ENCODE measurements at regions of chr18 and their contacts with region 1.

Region 1: DNA sequence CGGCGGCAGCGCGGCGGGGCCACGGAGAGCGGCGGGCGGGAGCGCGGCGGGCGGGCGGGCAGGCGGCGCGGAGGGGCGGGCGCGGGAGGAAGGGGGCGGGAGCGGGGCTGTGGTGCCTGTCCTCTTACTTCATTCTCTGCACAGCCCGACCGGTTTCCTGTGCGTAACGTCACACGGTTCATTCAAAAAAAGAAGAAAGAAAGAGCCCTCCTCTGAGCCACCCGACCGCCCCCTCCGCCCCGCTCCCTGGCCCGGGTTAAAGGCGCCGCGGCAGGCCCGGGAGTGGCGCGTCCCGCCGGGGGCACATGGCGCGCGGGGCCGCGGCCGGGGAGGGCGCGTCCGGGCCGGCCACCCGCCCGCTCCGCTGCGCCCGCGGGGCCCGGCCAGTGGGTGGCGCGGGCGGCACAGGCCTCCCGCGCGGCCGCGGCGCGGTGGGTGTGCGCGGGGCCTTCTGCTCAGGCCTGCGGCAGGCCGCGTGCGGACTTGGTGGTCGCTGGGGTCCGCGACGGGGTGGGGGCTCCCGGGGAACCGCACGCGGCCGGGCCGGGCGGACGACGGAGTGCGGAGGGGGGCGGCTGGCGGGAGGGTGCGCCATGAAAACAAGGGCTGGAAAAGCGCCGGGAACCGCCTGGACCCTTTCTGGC is 599 bp upstream of the BCL2 start:
- DNase-seq: peak; percentile 75
- ATAC-seq: peak; percentile 76
- H3K4me3 ChIP-seq: peak overlapping the region; percentile 63
- H3K27ac ChIP-seq: peak overlapping the region; percentile 30
- H3K4me1 ChIP-seq: peaks cover 10% of the 10 kb centered on the region
- H3K27me3 ChIP-seq: peaks cover 18% of the 10 kb centered on the region
- CTCF ChIP-seq: 0 out of 2 replicates have a peak, but pooled peaks have one; percentile 23
- POLR2A ChIP-seq: no peak
- RAD21 ChIP-seq: no peak

Region 2: GRCh38 chr18:63016270-63016669 is 303.9 kb before region 1 on chr18:
- CTCF ChIA-PET with region 1: interaction called, 6 read pairs
- POLR2A ChIA-PET with region 1: no interaction called
- dilution Hi-C with region 1: no loop called
- in situ Hi-C with region 1: loop called (anchors 5 kb)
- intact Hi-C with region 1: loop called (anchors 1 kb)
- DNase-seq: peak; percentile 59
- ATAC-seq: peak; percentile 77
- H3K4me3 ChIP-seq: no peak overlapping the region
- H3K27ac ChIP-seq: no peak overlapping the region
- H3K4me1 ChIP-seq: no peaks in the 10 kb centered on the region
- H3K27me3 ChIP-seq: peaks cover 12% of the 10 kb centered on the region
- CTCF ChIP-seq: peak; percentile 92
- POLR2A ChIP-seq: no peak
- RAD21 ChIP-seq: peak; percentile 86

Region 3: GRCh38 chr18:63131106-63131958 is 188.8 kb before region 1 on chr18:
- CTCF ChIA-PET with region 1: interaction called, 20 read pairs
- POLR2A ChIA-PET with region 1: interaction called, 3 read pairs
- dilution Hi-C with region 1: no loop called
- in situ Hi-C with region 1: loop called (anchors 5 kb)
- intact Hi-C with region 1: loop called (anchors 1 kb)
- DNase-seq: peak; percentile 59
- ATAC-seq: peak; percentile 81
- H3K4me3 ChIP-seq: no peak overlapping the region
- H3K27ac ChIP-seq: no peak overlapping the region
- H3K4me1 ChIP-seq: no peaks in the 10 kb centered on the region
- H3K27me3 ChIP-seq: peaks cover 14% of the 10 kb centered on the region
- CTCF ChIP-seq: peak; percentile 75
- POLR2A ChIP-seq: no peak
- RAD21 ChIP-seq: peak; percentile 71

Region 4: DNA sequence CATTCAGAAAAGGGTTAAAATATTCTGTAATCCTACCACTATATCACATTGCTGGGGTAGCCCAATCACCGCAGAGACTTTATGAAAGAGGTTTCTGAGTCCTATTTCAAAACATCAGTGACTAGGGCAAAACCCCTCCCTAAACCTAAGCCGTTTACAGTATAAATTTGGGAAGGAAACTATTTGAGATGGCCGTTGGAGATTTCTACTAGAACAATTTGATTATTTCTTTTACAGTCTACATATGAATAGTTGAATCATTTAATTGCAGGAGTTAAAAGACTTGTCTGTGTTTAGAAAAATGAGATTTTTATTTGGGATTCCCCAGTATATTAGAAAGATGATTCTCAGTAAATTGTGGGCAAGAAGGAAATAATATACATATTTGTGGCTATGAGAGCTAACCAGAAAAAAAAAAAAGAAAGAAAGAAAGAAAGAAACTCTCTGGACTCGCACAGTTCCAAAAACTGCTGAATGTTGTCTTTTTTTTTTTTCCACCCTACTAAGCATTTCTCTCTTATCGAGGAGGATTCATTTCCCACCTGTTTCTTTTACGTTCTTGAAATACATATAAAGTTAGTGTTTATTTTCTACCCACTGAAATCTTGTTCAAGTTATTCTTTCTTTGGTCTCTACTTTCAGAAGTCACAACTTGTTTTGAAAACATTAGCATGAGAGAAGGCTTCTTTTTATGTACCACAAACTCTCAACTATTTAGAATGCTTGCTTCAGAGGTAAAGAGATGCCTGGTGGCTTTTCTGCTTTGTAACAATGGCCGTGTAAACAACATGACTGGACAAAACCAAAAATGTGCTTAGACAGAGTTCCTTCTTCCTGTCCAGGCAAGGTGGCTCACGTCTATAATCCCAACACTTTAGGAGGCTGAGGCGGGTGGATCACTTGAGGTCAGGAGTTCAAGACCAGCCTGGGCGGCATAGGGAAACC is 66.5 kb before region 1 on chr18:
- CTCF ChIA-PET with region 1: no interaction called
- POLR2A ChIA-PET with region 1: no interaction called
- dilution Hi-C with region 1: no loop called
- in situ Hi-C with region 1: no loop called
- intact Hi-C with region 1: loop called (anchors 5 kb)
- DNase-seq: peak; percentile 44
- ATAC-seq: peak; percentile 93
- H3K4me3 ChIP-seq: no peak overlapping the region
- H3K27ac ChIP-seq: no peak overlapping the region
- H3K4me1 ChIP-seq: peaks cover 5% of the 10 kb centered on the region
- H3K27me3 ChIP-seq: peaks cover 20% of the 10 kb centered on the region
- CTCF ChIP-seq: no peak
- POLR2A ChIP-seq: no peak
- RAD21 ChIP-seq: no peak

Region 5: GRCh38 chr18:63297687-63298399 is 22.3 kb before region 1 on chr18:
- CTCF ChIA-PET with region 1: no interaction called
- POLR2A ChIA-PET with region 1: no interaction called
- dilution Hi-C with region 1: no loop called
- in situ Hi-C with region 1: no loop called
- intact Hi-C with region 1: no loop called
- DNase-seq: no peak
- ATAC-seq: no peak
- H3K4me3 ChIP-seq: no peak overlapping the region
- H3K27ac ChIP-seq: no peak overlapping the region
- H3K4me1 ChIP-seq: no peaks in the 10 kb centered on the region; the same call in 1 of the 2 replicates
- H3K27me3 ChIP-seq: peaks cover 2% of the 10 kb centered on the region; the same call in 1 of the 2 replicates
- CTCF ChIP-seq: no peak
- POLR2A ChIP-seq: no peak
- RAD21 ChIP-seq: no peak

Region 6: DNA sequence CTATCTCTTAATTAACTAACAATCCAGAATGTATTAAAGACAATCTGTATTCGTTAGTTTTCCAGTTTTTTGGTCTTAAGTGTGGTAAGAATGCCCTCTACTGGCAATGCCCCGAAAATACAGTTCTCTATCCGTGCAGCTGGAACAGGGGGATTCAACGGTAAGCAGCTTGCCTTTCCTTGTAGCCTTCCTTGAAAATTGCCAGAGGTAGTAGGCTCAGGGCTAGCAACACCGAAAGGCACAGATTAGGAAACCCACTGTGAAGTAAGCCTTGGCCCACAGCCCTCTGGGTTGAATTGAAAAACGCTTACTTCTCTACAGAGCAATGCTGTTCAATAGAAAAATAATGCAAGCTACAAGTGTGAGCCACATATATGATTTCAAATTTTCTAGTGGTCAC is 119.2 kb after region 1 on chr18:
- CTCF ChIA-PET with region 1: interaction called, 3 read pairs
- POLR2A ChIA-PET with region 1: no interaction called
- dilution Hi-C with region 1: no loop called
- in situ Hi-C with region 1: no loop called
- intact Hi-C with region 1: loop called (anchors 2 kb)
- DNase-seq: peak; percentile 70
- ATAC-seq: peak; percentile 95
- H3K4me3 ChIP-seq: no peak overlapping the region
- H3K27ac ChIP-seq: no peak overlapping the region
- H3K4me1 ChIP-seq: no peaks in the 10 kb centered on the region
- H3K27me3 ChIP-seq: peaks cover 7% of the 10 kb centered on the region
- CTCF ChIP-seq: peak; percentile 85
- POLR2A ChIP-seq: no peak
- RAD21 ChIP-seq: peak; percentile 77

Measured in IMR-90 (cell line).